Activated CD8-positive, alpha-beta T cell treated with anti-CD3 and anti-CD28 coated beads, Interleukin-2, amount 10 ng/mL, durations not matched to agents 7 days and 5 days (primary cell): ENCODE measurements at regions of chr15 and their contacts with region 1.

Region 1: DNA sequence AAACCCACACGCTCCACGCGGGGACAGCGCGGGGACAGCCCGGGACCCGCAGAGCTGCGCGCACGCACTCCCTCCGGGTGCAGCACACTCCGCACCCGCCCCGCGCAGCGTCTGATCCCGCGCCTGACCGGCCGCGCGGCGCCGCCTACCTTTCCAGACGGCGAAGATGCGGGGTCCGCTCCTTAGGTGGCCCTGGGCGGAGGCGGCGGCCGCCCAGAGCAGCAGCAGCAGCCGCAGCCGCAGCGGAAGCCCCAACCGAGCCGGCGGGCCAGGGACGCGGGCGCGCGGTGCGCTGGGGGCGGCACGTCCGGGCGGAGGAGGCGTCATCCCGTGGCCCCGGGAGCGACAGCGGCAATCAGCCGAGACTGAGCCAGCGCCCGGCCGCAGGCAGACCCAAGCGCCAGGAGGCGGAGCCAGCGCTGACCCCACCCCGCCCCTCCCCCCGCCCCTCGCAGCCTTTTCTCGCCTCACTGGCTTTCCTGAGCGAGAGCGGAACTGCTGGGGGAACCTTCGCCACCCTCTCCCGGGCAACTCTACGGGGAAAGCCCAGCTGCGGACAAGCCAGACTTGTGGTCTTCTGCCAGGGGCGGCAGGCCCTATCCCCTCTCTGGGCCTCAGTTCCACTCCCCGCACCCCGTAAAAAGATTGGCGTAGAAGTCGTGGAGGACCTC is at the start of gene SEMA7A:
- DNase-seq: peak; percentile 88
- ATAC-seq: peak; percentile 90
- H3K4me3 Mint-ChIP-seq: peak within 1 kb of the TSS; percentile 83
- H3K27ac Mint-ChIP-seq: peak within 1 kb of the TSS; percentile 88
- H3K4me1 Mint-ChIP-seq: peaks cover 76% of the 10 kb centered on the region
- H3K27me3 Mint-ChIP-seq: no peaks in the 10 kb centered on the region
- total RNA-seq, gene SEMA7A: 16.1 to 16.9 TPM

Region 2: GRCh38 chr15:74275957-74276356 is 157.8 kb before region 1 on chr15:
- CTCF ChIA-PET with region 1: no interaction called
- POLR2A ChIA-PET with region 1: no interaction called
- DNase-seq: no peak
- ATAC-seq: peak; percentile 42
- H3K4me3 Mint-ChIP-seq: no peak overlapping the region
- H3K27ac Mint-ChIP-seq: no peak overlapping the region
- H3K4me1 Mint-ChIP-seq: peaks cover 2% of the 10 kb centered on the region
- H3K27me3 Mint-ChIP-seq: peaks cover 2% of the 10 kb centered on the region

Region 3: GRCh38 chr15:74373731-74374647 is 59.7 kb before region 1 on chr15:
- CTCF ChIA-PET with region 1: interaction called, 677 read pairs
- POLR2A ChIA-PET with region 1: interaction called, 4 read pairs
- DNase-seq: peak; percentile 97
- ATAC-seq: peak; percentile 97
- H3K4me3 Mint-ChIP-seq: peak overlapping the region; percentile 77
- H3K27ac Mint-ChIP-seq: peak overlapping the region; percentile 75
- H3K4me1 Mint-ChIP-seq: peaks cover 25% of the 10 kb centered on the region
- H3K27me3 Mint-ChIP-seq: peaks cover 18% of the 10 kb centered on the region

Region 4: DNA sequence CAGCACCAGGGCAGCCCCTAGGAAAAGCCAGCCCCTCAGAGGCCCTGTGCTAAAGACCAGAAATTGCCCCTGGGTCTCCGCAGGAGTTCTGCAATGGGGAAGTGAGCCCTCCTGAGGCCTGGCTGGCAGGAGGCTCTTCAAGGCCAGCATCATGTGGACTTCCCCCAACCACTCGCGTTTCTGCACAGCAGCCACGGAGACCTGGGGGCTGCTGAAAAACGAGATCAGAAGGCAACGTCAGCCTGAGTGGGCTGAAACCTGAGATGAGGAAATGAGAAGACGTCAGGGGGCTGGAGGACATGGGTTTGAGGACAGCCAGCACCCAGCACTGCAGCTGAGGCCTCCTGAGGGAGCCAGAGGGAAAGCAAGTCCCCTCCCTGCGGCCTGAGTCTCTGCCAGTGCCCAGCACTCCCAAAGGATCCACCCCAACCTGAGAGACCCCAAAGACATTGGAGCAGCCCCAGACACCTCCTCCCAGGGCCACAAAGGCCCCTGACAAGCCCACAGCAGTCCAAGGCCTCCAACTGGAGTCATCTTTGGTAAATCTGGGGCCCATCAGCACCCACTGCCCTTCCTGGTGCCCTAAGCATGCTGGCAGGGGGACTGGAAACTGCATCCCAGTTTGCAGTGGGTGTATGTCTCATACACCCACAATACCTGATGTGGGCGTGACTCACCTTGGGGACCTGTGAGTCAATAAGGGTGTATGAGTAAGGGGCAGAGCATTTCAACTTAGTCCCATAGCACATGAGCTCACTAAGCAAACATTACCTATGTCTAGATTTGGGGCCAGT is 37.1 kb before region 1 on chr15:
- CTCF ChIA-PET with region 1: interaction called, 39 read pairs
- POLR2A ChIA-PET with region 1: interaction called, 29 read pairs
- DNase-seq: no peak
- ATAC-seq: no peak
- H3K4me3 Mint-ChIP-seq: no peak overlapping the region
- H3K27ac Mint-ChIP-seq: peak overlapping the region; percentile 81
- H3K4me1 Mint-ChIP-seq: peaks cover 88% of the 10 kb centered on the region
- H3K27me3 Mint-ChIP-seq: no peaks in the 10 kb centered on the region